A549 (cell line): ENCODE measurements at regions of chr16 and their contacts with region 1.

Region 1: DNA sequence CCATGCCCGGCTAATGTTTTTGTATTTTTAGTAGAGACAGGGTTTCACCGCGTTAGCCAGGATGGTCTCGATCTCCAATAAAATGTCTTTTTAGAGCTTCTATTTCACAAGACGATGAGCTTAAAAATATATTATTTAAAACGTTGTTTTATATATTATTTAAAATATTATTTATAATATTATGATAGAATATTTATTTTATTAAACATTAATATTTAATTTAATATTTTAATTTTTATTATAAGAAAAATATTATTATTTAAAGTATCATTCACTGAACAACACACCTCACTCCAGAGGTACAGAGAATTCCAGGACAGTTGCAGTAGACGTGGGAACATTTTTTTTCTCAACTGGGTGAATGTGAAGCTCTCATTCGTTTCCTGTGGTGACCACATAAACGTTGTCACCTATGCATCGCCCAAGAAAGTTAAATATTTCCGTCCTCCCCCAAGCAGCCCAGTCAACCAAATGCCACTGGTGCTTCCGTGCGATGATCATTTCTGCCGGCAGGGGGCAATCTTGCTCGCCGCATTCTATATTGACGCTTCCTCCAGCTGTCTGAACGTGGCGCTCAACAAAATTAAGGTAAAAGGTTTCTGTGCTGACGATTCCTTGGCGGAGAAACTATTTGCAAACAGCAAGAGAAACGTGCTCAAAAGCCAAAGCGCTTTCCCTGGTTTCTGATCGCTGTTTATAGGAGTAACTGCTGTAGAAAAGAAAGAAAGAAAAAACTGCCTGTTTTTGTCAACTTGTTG is 41.7 kb upstream of the PRSS54 start:
- DNase-seq: peak; percentile 77 to 80
- ATAC-seq: peak; percentile 85 to 90
- H3K4me3 ChIP-seq: 0 out of 3 replicates have a peak overlapping the region, but pooled peaks have one; percentile 21
- H3K27ac ChIP-seq: 0 out of 6 replicates have a peak overlapping the region, but pooled peaks of 1 of the 2 experiments have one; percentile 27
- H3K4me1 ChIP-seq: peaks cover 3% of the 10 kb centered on the region; the same call in 1 of the 3 replicates
- CTCF ChIP-seq: peak; percentile 97
- EP300 ChIP-seq: no peak
- POLR2A ChIP-seq: no peak
- RAD21 ChIP-seq: peak; percentile 94

Region 2: GRCh38 chr16:58243528-58244004 is 92.9 kb before region 1 on chr16:
- CTCF ChIA-PET with region 1: no interaction called
- POLR2A ChIA-PET with region 1: no interaction called
- DNase-seq: no peak
- ATAC-seq: no peak
- H3K4me3 ChIP-seq: no peak overlapping the region
- H3K27ac ChIP-seq: no peak overlapping the region
- H3K4me1 ChIP-seq: no peaks in the 10 kb centered on the region
- CTCF ChIP-seq: no peak
- EP300 ChIP-seq: no peak
- POLR2A ChIP-seq: no peak
- RAD21 ChIP-seq: no peak

Region 3: GRCh38 chr16:58324792-58325191 is 11.7 kb before region 1 on chr16:
- CTCF ChIA-PET with region 1: interaction called, 66 read pairs
- POLR2A ChIA-PET with region 1: interaction called, 3 read pairs
- DNase-seq: no peak
- ATAC-seq: no peak
- H3K4me3 ChIP-seq: no peak overlapping the region
- H3K27ac ChIP-seq: no peak overlapping the region
- H3K4me1 ChIP-seq: peaks cover 8% of the 10 kb centered on the region; the same call in 2 of the 3 replicates
- CTCF ChIP-seq: no peak
- EP300 ChIP-seq: no peak
- POLR2A ChIP-seq: no peak
- RAD21 ChIP-seq: no peak

Region 4: GRCh38 chr16:58392215-58393137 is 56.0 kb after region 1 on chr16 and contains the start of gene GINS3:
- CTCF ChIA-PET with region 1: interaction called, 16 read pairs
- POLR2A ChIA-PET with region 1: interaction called, 7 read pairs
- DNase-seq: peak; percentile 93 to 94
- ATAC-seq: peak; percentile 97 to 98
- H3K4me3 ChIP-seq: peak within 1 kb of the TSS; percentile 88
- H3K27ac ChIP-seq: peak within 1 kb of the TSS; percentile 89 to 91
- H3K4me1 ChIP-seq: 0 out of 3 replicates have a peak, but pooled peaks cover 11% of the 10 kb centered on the region
- CTCF ChIP-seq: no peak
- EP300 ChIP-seq: no peak
- POLR2A ChIP-seq: peak; percentile 57
- RAD21 ChIP-seq: no peak
- polyA plus RNA-seq, gene GINS3: 21.0 and 22.3 TPM in 2 replicates

Region 5: DNA sequence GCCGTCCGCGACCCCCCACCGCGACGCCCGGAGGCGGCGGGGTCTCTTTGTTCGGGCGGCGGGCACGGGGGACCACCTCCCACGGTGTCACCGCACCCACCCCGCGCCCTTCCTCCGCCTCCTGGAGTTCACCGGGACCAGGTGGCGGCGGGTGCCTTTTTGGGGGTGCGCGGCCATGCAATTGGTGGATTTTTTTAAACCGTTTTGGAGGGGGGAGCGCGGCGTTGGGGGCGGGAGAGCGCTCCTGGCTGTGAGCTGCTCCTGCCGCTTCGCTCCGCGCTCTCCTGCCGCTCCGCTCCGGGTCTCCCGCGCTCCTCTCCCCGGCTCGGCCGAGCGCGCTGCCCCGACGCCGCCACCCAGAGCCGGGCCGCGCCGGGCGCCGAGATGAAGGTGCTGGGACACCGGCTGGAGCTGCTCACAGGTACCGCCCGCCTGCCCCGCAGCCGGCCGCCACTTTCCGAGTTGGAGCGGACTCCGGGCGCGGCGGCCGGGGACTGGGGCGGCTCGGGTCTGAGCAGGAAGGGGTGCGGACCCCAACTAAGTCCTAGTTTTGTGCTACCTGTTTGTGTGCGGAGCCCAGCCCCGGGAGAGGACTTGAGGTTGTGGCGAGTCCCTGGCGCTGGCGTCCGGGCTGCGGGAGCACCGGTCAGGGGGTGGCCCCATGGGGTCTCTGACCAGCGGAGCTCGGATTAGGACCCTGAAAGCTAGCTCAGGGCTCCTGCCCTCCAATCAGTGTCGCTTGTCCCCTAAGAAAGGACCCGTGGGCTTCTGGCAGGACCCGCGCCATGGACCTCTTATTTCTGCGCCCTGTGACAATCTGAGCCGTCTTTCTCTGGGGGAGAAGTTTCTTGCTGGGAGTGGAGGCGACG is 127.8 kb after region 1 on chr16:
- CTCF ChIA-PET with region 1: interaction called, 33 read pairs
- POLR2A ChIA-PET with region 1: no interaction called
- DNase-seq: no peak
- ATAC-seq: peak; percentile 64 to 82
- H3K4me3 ChIP-seq: peak overlapping the region; percentile 74
- H3K27ac ChIP-seq: peak overlapping the region; percentile 60 to 84
- H3K4me1 ChIP-seq: peaks cover 22% of the 10 kb centered on the region
- CTCF ChIP-seq: no peak
- EP300 ChIP-seq: no peak
- POLR2A ChIP-seq: no peak
- RAD21 ChIP-seq: no peak; a peak in 1 of 5 replicates

Region 6: GRCh38 chr16:58494981-58495520 is 158.5 kb after region 1 on chr16:
- CTCF ChIA-PET with region 1: interaction called, 721 read pairs
- POLR2A ChIA-PET with region 1: no interaction called
- DNase-seq: peak; percentile 92 to 93
- ATAC-seq: peak; percentile 52 to 73
- H3K4me3 ChIP-seq: no peak overlapping the region
- H3K27ac ChIP-seq: 0 out of 6 replicates have a peak overlapping the region, but pooled peaks of 1 of the 2 experiments have one; percentile 36
- H3K4me1 ChIP-seq: no peaks in the 10 kb centered on the region; the same call in 2 of the 3 replicates
- CTCF ChIP-seq: peak; percentile 52; the same call in 2 of the 3 replicates
- EP300 ChIP-seq: no peak
- POLR2A ChIP-seq: no peak
- RAD21 ChIP-seq: peak in 1 of 2 experiments; percentile 42; a peak in 2 of 5 replicates

Region 7: GRCh38 chr16:58661199-58661830 is 324.8 kb after region 1 on chr16:
- CTCF ChIA-PET with region 1: interaction called, 38 read pairs
- POLR2A ChIA-PET with region 1: interaction called, 3 read pairs
- DNase-seq: peak; percentile 87 to 94
- ATAC-seq: peak; percentile 96 to 98
- H3K4me3 ChIP-seq: no peak overlapping the region
- H3K27ac ChIP-seq: no peak overlapping the region
- H3K4me1 ChIP-seq: peaks cover 3% of the 10 kb centered on the region; the same call in 1 of the 3 replicates
- CTCF ChIP-seq: peak; percentile 87
- EP300 ChIP-seq: no peak
- POLR2A ChIP-seq: no peak
- RAD21 ChIP-seq: peak; percentile 88 to 92